IMR-90 (cell line): ENCODE measurements at regions of chr6 and their contacts with region 1.

Region 1: GRCh38 chr6:140671926-140672325 is 1297.5 kb upstream of the CITED2 start:
- DNase-seq: no peak
- ATAC-seq: no peak
- H3K4me3 ChIP-seq: no peak overlapping the region
- H3K27ac ChIP-seq: no peak overlapping the region
- H3K4me1 ChIP-seq: no peaks in the 10 kb centered on the region; the same call in 1 of the 2 replicates
- H3K27me3 ChIP-seq: no peaks in the 10 kb centered on the region
- CTCF ChIP-seq: no peak
- POLR2A ChIP-seq: no peak
- RAD21 ChIP-seq: no peak

Region 2: GRCh38 chr6:140732155-140732554 is 60.2 kb after region 1 on chr6:
- CTCF ChIA-PET with region 1: no interaction called
- POLR2A ChIA-PET with region 1: no interaction called
- dilution Hi-C with region 1: no loop called
- in situ Hi-C with region 1: no loop called
- intact Hi-C with region 1: no loop called
- DNase-seq: peak; percentile 17
- ATAC-seq: no peak
- H3K4me3 ChIP-seq: no peak overlapping the region
- H3K27ac ChIP-seq: peak overlapping the region; percentile 62
- H3K4me1 ChIP-seq: no peaks in the 10 kb centered on the region
- H3K27me3 ChIP-seq: no peaks in the 10 kb centered on the region
- CTCF ChIP-seq: no peak
- POLR2A ChIP-seq: no peak
- RAD21 ChIP-seq: no peak

Region 3: GRCh38 chr6:140897804-140898573 is 226.1 kb after region 1 on chr6:
- CTCF ChIA-PET with region 1: no interaction called
- POLR2A ChIA-PET with region 1: no interaction called
- dilution Hi-C with region 1: no loop called
- in situ Hi-C with region 1: no loop called
- intact Hi-C with region 1: no loop called
- DNase-seq: no peak
- ATAC-seq: no peak
- H3K4me3 ChIP-seq: no peak overlapping the region
- H3K27ac ChIP-seq: no peak overlapping the region
- H3K4me1 ChIP-seq: no peaks in the 10 kb centered on the region
- H3K27me3 ChIP-seq: no peaks in the 10 kb centered on the region
- CTCF ChIP-seq: no peak
- POLR2A ChIP-seq: no peak
- RAD21 ChIP-seq: no peak

Region 4: DNA sequence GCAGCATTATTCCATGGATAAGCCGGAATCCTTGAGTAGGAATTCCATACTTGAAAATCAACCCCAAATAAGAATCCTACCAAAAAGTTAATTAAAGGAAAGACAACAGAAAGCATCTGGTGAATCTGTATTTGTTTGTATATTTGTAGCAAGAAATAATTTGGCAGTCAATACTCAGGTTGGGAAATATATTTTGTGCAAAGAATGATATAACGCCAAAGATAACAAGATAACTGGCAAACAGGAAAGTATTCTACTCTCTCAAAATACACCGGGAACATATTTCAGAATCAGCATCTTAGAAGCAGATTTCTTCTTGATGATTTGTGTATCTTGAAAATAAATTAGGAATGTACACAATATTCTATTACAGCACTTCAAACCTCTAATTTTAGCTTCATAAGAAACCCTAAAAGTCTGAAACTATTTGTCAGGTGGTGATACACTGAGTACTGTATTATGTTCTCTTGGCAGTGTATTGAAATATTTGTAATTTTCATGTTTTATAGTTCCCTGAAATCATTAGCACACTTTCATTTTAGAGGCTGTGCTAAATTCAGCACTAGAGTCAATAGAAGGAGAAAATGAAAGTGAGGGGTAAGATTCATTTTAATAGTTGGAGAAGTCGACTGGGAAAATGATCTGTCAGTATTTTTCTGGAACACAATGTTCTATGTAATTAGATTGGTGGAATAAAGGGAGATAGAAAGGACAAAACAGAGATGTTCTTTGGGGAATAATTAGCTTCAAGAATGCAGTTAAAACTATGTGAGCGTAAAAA is 581.1 kb after region 1 on chr6:
- CTCF ChIA-PET with region 1: no interaction called
- POLR2A ChIA-PET with region 1: no interaction called
- dilution Hi-C with region 1: no loop called
- in situ Hi-C with region 1: no loop called
- intact Hi-C with region 1: loop called (anchors 10 kb)
- DNase-seq: no peak
- ATAC-seq: no peak
- H3K4me3 ChIP-seq: no peak overlapping the region
- H3K27ac ChIP-seq: no peak overlapping the region
- H3K4me1 ChIP-seq: no peaks in the 10 kb centered on the region
- H3K27me3 ChIP-seq: no peaks in the 10 kb centered on the region
- CTCF ChIP-seq: no peak
- POLR2A ChIP-seq: no peak
- RAD21 ChIP-seq: no peak